ENCODE measurements at regions of chr17 and their contacts with region 1.

Region 1: GRCh38 chr17:42322382-42323267 is 34.3 kb downstream of the STAT5A start:
- DNase-seq: peak; percentile 90 to 97
- H3K4me3 ChIP-seq: no peak overlapping the region
- H3K27ac ChIP-seq: peak overlapping the region; percentile 56 to 59
- H3K4me1 ChIP-seq: no peaks in the 10 kb centered on the region
- H3K27me3 ChIP-seq: no peaks in the 10 kb centered on the region
- CTCF ChIP-seq: peak; percentile 98 to 100 (median 100)
- POLR2A ChIP-seq: peak in 1 of 2 donors; percentile 22

Region 2: DNA sequence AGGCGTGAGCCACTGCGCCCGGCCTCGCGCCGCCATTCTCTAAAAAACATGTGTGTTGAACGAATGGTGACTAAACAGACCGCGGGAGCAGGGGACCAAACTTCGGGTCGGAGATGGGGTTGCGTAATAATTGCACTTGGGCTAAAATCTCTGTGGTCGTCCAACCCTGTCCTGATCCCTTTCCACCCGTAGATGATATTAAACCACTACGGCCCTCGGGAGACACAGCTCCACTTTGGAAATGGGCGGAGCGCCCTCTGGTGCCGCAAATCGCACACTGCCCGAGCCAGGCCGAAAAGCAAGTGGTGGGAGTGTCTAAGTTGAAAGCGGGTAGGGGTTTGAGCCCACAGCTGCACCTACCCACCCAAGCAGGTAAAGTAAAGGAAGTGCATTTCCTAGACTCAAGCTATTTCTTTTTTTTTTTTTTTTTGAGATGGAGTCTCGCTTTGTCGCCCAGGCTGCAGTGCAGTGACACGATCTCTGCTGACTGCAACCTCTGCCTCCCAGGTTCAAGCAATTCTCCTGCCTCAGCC is 83.4 kb after region 1 on chr17:
- intact Hi-C with region 1: loop called (anchors 2 kb)
- DNase-seq: peak; percentile 86 to 90
- H3K4me3 ChIP-seq: no peak overlapping the region
- H3K27ac ChIP-seq: peak overlapping the region; percentile 84 to 91
- H3K4me1 ChIP-seq: peaks cover 22 to 39% of the 10 kb centered on the region in 2 donors
- H3K27me3 ChIP-seq: no peaks in the 10 kb centered on the region
- CTCF ChIP-seq: peak; percentile 85 to 93 (median 86)
- POLR2A ChIP-seq: no peak

Region 3: DNA sequence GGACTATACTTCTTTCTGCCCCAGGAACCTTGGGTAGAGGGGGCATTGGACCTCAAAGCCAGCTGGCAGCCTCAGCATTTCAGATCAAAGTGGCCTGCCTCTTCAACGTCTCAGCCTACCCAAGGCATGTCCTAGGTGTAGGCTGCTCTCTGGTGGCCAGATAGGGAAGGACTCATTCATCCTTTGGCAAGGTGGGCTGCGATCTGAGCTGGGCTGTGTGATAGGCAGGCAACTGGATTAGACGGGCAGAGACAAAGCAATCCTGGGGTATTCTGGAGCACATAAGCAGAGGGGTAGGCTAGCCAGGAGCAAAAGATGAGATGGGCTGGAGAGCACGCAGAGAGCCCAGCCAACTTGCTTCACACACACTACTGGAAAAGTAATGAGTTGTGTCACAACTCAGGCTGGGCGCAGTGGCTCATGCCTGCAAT is 204.7 kb after region 1 on chr17:
- intact Hi-C with region 1: loop called (anchors 5 kb)
- DNase-seq: peak; percentile 79 to 85
- H3K4me3 ChIP-seq: no peak overlapping the region
- H3K27ac ChIP-seq: peak overlapping the region; percentile 95 to 99
- H3K4me1 ChIP-seq: peaks cover 9 to 10% of the 10 kb centered on the region in 2 donors
- H3K27me3 ChIP-seq: no peaks in the 10 kb centered on the region
- CTCF ChIP-seq: peak; percentile 82 to 96 (median 89)
- POLR2A ChIP-seq: no peak

Measured in uterus (tissue), 4 donors.